Activated T-helper 1 cell treated with anti-CD3 and anti-CD28 coated beads, Interleukin-12 subunit alpha, Interleukin-12 subunit beta, Interleukin-2, Interleukin-4 antibody, amounts not matched to agents 30 ng/mL and 10 ng/mL and 1 ng/mL, durations not matched to agents 14 hours and 24 hours and 36 hours (primary cell): ENCODE measurements at regions of chr11 and their contacts with region 1.

Region 1: GRCh38 chr11:128630367-128631230 is 43.2 kb upstream of the ETS1 start:
- DNase-seq: peak; percentile 81
- H3K4me3 Mint-ChIP-seq: peak overlapping the region; percentile 76
- H3K27ac Mint-ChIP-seq: peak overlapping the region; percentile 96
- H3K4me1 Mint-ChIP-seq: peaks cover 76% of the 10 kb centered on the region
- H3K27me3 Mint-ChIP-seq: peaks cover 4% of the 10 kb centered on the region

Region 2: GRCh38 chr11:128157423-128158298 is 472.9 kb before region 1 on chr11:
- intact Hi-C with region 1: loop called (anchors 1 kb)
- DNase-seq: peak; percentile 44
- H3K4me3 Mint-ChIP-seq: peak overlapping the region; percentile 16
- H3K27ac Mint-ChIP-seq: peak overlapping the region; percentile 66
- H3K4me1 Mint-ChIP-seq: peaks cover 13% of the 10 kb centered on the region
- H3K27me3 Mint-ChIP-seq: peaks cover 16% of the 10 kb centered on the region

Region 3: GRCh38 chr11:128323381-128323780 is 307.2 kb before region 1 on chr11:
- intact Hi-C with region 1: loop called (anchors 1 kb)
- DNase-seq: no peak
- H3K4me3 Mint-ChIP-seq: peak overlapping the region; percentile 70
- H3K27ac Mint-ChIP-seq: peak overlapping the region; percentile 95
- H3K4me1 Mint-ChIP-seq: peaks cover 91% of the 10 kb centered on the region
- H3K27me3 Mint-ChIP-seq: no peaks in the 10 kb centered on the region

Region 4: GRCh38 chr11:128472128-128473089 is 158.2 kb before region 1 on chr11:
- intact Hi-C with region 1: loop called (anchors 1 kb)
- DNase-seq: peak; percentile 61
- H3K4me3 Mint-ChIP-seq: peak overlapping the region; percentile 80
- H3K27ac Mint-ChIP-seq: peak overlapping the region; percentile 95
- H3K4me1 Mint-ChIP-seq: peaks cover 94% of the 10 kb centered on the region
- H3K27me3 Mint-ChIP-seq: no peaks in the 10 kb centered on the region

Region 5: DNA sequence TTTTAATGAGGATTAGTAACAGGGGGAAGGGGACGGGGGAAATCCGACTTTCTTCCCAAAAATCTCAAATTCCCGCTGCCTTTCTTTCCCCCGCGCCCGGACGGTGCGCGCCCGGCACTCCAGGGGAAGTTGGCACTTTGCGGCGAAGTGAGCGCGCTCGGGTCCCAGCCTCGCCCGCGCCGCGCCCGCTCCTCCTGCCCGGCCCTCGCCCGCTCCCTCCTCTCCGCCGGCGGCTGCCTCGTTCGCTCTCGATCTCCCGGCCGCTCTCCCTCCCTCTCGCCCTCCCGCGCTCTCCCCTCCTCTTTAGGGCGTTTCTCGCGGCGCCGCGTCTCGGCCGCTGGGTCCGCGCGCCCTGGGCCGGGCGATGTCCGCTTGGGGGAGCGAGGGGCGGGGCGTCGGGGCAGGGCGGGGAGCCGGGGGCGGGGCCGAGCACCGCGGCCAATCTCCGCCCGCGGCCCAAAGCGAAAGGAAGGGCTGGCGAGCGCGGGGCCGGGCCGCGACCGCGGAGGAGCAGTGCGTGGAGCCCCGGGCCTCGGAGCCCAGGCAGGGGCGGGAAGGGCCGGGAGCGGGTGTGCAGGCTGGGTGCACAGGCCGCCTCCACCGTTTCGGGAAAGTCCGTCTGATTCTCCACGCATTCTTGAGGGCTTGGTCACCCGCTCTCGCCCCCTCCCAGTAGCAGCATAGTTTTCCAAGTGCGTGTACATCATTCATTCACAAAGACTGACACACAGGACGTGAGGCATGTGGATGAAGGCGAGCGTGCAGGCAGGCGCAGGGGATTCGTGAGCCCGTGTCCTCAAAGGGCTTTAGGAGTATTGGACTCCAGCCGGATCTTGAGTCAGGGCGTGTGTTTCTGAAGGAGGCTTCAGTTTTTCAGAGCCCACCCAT is 108.3 kb before region 1 on chr11:
- intact Hi-C with region 1: loop called (anchors 1 kb)
- DNase-seq: peak; percentile 91
- H3K4me3 Mint-ChIP-seq: peak overlapping the region; percentile 96
- H3K27ac Mint-ChIP-seq: peak overlapping the region; percentile 98
- H3K4me1 Mint-ChIP-seq: peaks cover 65% of the 10 kb centered on the region
- H3K27me3 Mint-ChIP-seq: no peaks in the 10 kb centered on the region

Region 6: DNA sequence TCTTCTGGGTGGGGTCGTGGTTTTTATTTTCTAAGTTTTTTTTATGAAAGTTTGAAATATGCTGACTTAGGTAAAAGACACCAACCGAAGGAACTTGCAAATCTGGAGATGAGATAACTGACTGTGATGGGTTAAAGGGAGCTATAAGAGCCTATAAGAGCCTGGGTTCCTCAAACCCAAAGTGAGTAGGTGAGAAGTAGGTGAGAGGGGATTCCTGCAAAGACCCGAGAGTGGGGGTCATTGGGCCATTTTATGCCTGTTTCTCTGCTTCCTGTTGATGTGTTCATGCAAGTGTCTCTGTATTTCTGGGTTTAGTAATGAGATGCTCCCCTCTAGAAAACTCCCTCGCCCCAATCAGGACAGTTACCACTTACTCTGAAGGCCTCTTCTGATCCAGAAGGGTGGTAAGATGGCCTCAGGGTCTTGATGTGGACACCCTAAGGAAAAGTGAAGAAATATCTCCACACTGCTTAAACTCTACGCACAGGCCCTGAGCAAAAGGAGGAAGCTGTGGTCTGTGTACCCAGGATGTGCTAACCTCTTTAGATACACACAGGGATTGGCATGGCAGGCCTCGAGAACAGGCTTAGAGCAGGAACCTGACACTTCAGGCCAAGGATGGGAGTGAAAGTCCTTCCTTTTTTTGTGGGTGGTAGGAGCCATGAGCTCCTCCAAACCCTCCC is 65.1 kb after region 1 on chr11:
- intact Hi-C with region 1: loop called (anchors 2 kb)
- DNase-seq: peak; percentile 38
- H3K4me3 Mint-ChIP-seq: peak overlapping the region; percentile 87
- H3K27ac Mint-ChIP-seq: peak overlapping the region; percentile 91
- H3K4me1 Mint-ChIP-seq: peaks cover 74% of the 10 kb centered on the region
- H3K27me3 Mint-ChIP-seq: peaks cover 15% of the 10 kb centered on the region